ENCODE measurements at regions of chrX and their contacts with region 1.

Region 1: GRCh38 chrX:110156167-110156754 is 153.3 kb downstream of the TMEM164 start:
- DNase-seq: no peak
- ATAC-seq: no peak
- H3K4me3 Mint-ChIP-seq: no peak overlapping the region
- H3K27ac Mint-ChIP-seq: no peak overlapping the region
- H3K4me1 Mint-ChIP-seq: peaks cover 13% of the 10 kb centered on the region
- H3K27me3 Mint-ChIP-seq: no peaks in the 10 kb centered on the region
- CTCF ChIP-seq: no peak

Region 2: DNA sequence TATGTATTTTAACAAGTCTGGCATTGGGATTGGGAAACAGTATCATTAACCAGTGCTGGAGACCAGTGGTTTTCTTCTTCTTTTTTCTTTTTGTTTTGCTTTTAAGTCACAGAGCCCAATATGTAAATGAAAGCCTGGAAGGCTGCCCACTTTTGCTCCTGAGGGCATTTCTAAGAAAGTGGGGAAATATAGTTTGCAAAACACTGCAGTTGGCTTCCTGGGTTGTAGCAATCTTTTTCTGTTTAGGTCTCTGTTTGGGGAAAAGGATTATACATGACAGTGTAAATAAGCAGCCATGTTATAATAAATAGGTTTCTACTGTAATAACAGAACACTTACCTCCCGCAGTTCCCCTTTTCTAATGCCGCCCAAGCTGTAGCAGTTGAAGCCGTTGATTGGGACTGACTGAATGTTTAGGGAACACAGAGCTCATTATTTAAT is 47.9 kb before region 1 on chrX:
- CTCF ChIA-PET with region 1: no interaction called
- POLR2A ChIA-PET with region 1: no interaction called
- intact Hi-C with region 1: no loop called
- DNase-seq: no peak
- ATAC-seq: no peak
- H3K4me3 Mint-ChIP-seq: no peak overlapping the region
- H3K27ac Mint-ChIP-seq: no peak overlapping the region
- H3K4me1 Mint-ChIP-seq: peaks cover 10% of the 10 kb centered on the region
- H3K27me3 Mint-ChIP-seq: no peaks in the 10 kb centered on the region
- CTCF ChIP-seq: no peak

Region 3: GRCh38 chrX:110402479-110403230 is 246.4 kb after region 1 on chrX:
- CTCF ChIA-PET with region 1: interaction called, 213 read pairs
- POLR2A ChIA-PET with region 1: no interaction called
- intact Hi-C with region 1: no loop called
- DNase-seq: no peak
- ATAC-seq: no peak
- H3K4me3 Mint-ChIP-seq: no peak overlapping the region
- H3K27ac Mint-ChIP-seq: no peak overlapping the region
- H3K4me1 Mint-ChIP-seq: no peaks in the 10 kb centered on the region
- H3K27me3 Mint-ChIP-seq: peaks cover 4% of the 10 kb centered on the region
- CTCF ChIP-seq: no peak

Region 4: GRCh38 chrX:110407910-110408545 is 251.8 kb after region 1 on chrX:
- CTCF ChIA-PET with region 1: interaction called, 213 read pairs
- POLR2A ChIA-PET with region 1: no interaction called
- intact Hi-C with region 1: loop called (anchors 1 kb)
- DNase-seq: no peak
- ATAC-seq: peak; percentile 42
- H3K4me3 Mint-ChIP-seq: no peak overlapping the region
- H3K27ac Mint-ChIP-seq: no peak overlapping the region
- H3K4me1 Mint-ChIP-seq: peaks cover 1% of the 10 kb centered on the region
- H3K27me3 Mint-ChIP-seq: no peaks in the 10 kb centered on the region
- CTCF ChIP-seq: no peak

Region 5: GRCh38 chrX:110412971-110413721 is 256.9 kb after region 1 on chrX:
- CTCF ChIA-PET with region 1: interaction called, 213 read pairs
- POLR2A ChIA-PET with region 1: no interaction called
- intact Hi-C with region 1: loop called (anchors 1 kb)
- DNase-seq: peak; percentile 37
- ATAC-seq: peak; percentile 86
- H3K4me3 Mint-ChIP-seq: no peak overlapping the region
- H3K27ac Mint-ChIP-seq: no peak overlapping the region
- H3K4me1 Mint-ChIP-seq: peaks cover 5% of the 10 kb centered on the region
- H3K27me3 Mint-ChIP-seq: no peaks in the 10 kb centered on the region
- CTCF ChIP-seq: peak; percentile 60

Region 6: DNA sequence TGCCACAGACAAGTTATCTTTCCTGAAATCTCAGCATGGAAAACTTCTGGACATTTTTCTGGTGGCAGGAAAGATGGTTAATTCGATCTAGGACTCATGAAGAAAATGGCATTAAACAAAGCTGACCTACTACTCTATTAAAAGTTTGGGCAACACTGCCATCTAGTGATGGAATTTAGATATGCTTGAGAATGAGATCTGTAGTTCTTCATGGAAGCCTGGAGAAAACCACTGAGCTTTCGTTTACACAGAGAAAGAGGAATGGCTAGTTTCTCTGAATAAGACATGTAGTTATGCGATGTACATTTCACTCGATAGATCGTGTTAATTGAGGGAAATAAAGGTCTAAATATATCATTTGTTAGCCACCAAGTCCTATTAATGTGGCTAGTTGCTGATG is 691.1 kb after region 1 on chrX:
- CTCF ChIA-PET with region 1: interaction called, 8 read pairs
- POLR2A ChIA-PET with region 1: no interaction called
- intact Hi-C with region 1: loop called (anchors 2 kb)
- DNase-seq: no peak
- ATAC-seq: no peak
- H3K4me3 Mint-ChIP-seq: no peak overlapping the region
- H3K27ac Mint-ChIP-seq: no peak overlapping the region
- H3K4me1 Mint-ChIP-seq: no peaks in the 10 kb centered on the region
- H3K27me3 Mint-ChIP-seq: peaks cover 2% of the 10 kb centered on the region
- CTCF ChIP-seq: no peak